ENCODE measurements at regions of chr15 and their contacts with region 1.

Region 1: GRCh38 chr15:52464478-52464877 is 64.2 kb downstream of the MYO5A start:
- DNase-seq: no peak
- ATAC-seq: no peak
- H3K4me3 ChIP-seq: no peak overlapping the region
- H3K27ac ChIP-seq: no peak overlapping the region
- H3K4me1 ChIP-seq: peaks cover 2% of the 10 kb centered on the region; the same call in 1 of the 2 replicates
- H3K27me3 ChIP-seq: no peaks in the 10 kb centered on the region
- CTCF ChIP-seq: no peak

Region 2: GRCh38 chr15:52506549-52506948 is 42.1 kb after region 1 on chr15:
- CTCF ChIA-PET with region 1: no interaction called
- POLR2A ChIA-PET with region 1: interaction called, 18 read pairs
- in situ Hi-C with region 1: no loop called
- intact Hi-C with region 1: no loop called
- DNase-seq: no peak
- ATAC-seq: no peak
- H3K4me3 ChIP-seq: no peak overlapping the region
- H3K27ac ChIP-seq: no peak overlapping the region
- H3K4me1 ChIP-seq: no peaks in the 10 kb centered on the region; the same call in 1 of the 2 replicates
- H3K27me3 ChIP-seq: no peaks in the 10 kb centered on the region
- CTCF ChIP-seq: no peak

Measured in Panc1 (cell line).